Dendritic cell treated with granulocyte-macrophage colony-stimulating factor and Interleukin-4, amounts not matched to agents 40 ng/mL and 50 ng/mL, for 4 days (primary cell): ENCODE measurements at regions of chr17 and their contacts with region 1.

Region 1: GRCh38 chr17:82153745-82154375 is 55.8 kb upstream of the FASN start:
- H3K4me3 Mint-ChIP-seq: no peak overlapping the region
- H3K27ac Mint-ChIP-seq: no peak overlapping the region
- H3K4me1 Mint-ChIP-seq: no peaks in the 10 kb centered on the region
- H3K27me3 Mint-ChIP-seq: no peaks in the 10 kb centered on the region

Region 2: GRCh38 chr17:81959362-81960129 is 194.3 kb before region 1 on chr17:
- intact Hi-C with region 1: loop called (anchors 10 kb)
- H3K4me3 Mint-ChIP-seq: peak overlapping the region; percentile 55
- H3K27ac Mint-ChIP-seq: no peak overlapping the region
- H3K4me1 Mint-ChIP-seq: peaks cover 4% of the 10 kb centered on the region
- H3K27me3 Mint-ChIP-seq: peaks cover 56% of the 10 kb centered on the region

Region 3: DNA sequence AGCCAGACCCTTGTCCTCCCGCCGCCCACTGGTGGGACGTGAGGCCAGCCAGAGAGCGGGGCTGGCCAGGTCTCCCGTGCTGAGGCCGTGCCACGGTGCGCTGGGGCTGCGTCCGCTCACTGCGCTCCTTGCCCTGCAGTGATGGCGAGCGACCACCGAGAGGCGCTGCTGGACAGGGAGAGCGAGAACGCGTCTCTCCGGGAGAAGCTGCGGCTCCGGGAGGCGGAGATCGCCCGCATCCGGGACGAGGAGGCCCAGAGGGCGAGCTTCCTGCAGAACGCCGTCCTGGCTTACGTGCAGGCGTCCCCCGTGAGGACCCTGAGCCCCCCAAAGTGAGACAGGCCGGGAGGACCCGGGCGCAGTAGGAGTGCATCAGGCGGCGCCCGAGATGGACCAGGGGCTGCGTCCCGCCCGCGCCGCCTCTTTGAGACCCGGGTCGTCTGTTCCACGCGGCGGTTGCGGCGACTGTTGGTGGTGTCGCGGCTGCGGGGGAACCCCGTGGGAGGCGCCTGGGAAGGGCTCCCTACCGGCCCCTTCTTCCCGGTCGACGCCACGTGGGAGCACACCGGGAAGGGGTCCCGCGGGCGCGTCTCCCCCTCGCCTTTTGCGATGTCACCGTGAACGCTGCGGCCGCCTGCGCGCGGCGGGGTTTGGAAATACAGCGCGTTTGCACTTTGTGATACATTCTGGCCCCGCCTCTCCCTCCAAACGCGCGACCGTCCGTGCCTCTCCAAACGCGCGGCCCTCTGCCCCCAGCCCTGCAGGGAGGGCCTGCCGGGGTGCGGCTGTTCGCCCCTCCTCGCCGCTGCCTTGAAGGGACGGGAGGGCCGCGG is 123.2 kb before region 1 on chr17:
- intact Hi-C with region 1: loop called (anchors 1 kb)
- H3K4me3 Mint-ChIP-seq: peak overlapping the region; percentile 85
- H3K27ac Mint-ChIP-seq: peak overlapping the region; percentile 49
- H3K4me1 Mint-ChIP-seq: peaks cover 29% of the 10 kb centered on the region
- H3K27me3 Mint-ChIP-seq: peaks cover 29% of the 10 kb centered on the region